ENCODE measurements at regions of chr2 and their contacts with region 1.

Region 1: GRCh38 chr2:1823187-1824169 is 79.2 kb upstream of the PXDN start:
- DNase-seq: no peak
- H3K4me3 ChIP-seq: no peak overlapping the region
- H3K27ac ChIP-seq: peak overlapping the region; percentile 75 to 90 (median 82)
- H3K4me1 ChIP-seq: peaks cover 3 to 34% (median 28%) of the 10 kb centered on the region in 4 donors
- H3K27me3 ChIP-seq: no peaks in the 10 kb centered on the region
- CTCF ChIP-seq: no peak
- EP300 ChIP-seq: peak; percentile 54
- POLR2A ChIP-seq: no peak

Region 2: GRCh38 chr2:677056-677965 is 1146.2 kb before region 1 on chr2 and contains the start of gene TMEM18:
- intact Hi-C with region 1: loop called (anchors 5 kb)
- DNase-seq: peak; percentile 98
- H3K4me3 ChIP-seq: peak within 1 kb of the TSS; percentile 75 to 87 (median 82)
- H3K27ac ChIP-seq: peak within 1 kb of the TSS; percentile 93 to 99 (median 95)
- H3K4me1 ChIP-seq: peaks cover 13 to 34% (median 17%) of the 10 kb centered on the region in 4 donors
- H3K27me3 ChIP-seq: no peaks in the 10 kb centered on the region
- CTCF ChIP-seq: peak in 2 of 3 experiments; percentile 22 to 32
- EP300 ChIP-seq: no peak
- POLR2A ChIP-seq: peak; percentile 77
- total RNA-seq, gene TMEM18: 8.7 to 27.3 (median 10.2) TPM